Activated T-helper 1 cell treated with anti-CD3 and anti-CD28 coated beads, Interleukin-12 subunit alpha, Interleukin-12 subunit beta, Interleukin-2, Interleukin-4 antibody, amounts not matched to agents 30 ng/mL and 10 ng/mL and 1 ng/mL, durations not matched to agents 14 hours and 24 hours and 36 hours (primary cell): ENCODE measurements at regions of chr16 and their contacts with region 1.

Region 1: DNA sequence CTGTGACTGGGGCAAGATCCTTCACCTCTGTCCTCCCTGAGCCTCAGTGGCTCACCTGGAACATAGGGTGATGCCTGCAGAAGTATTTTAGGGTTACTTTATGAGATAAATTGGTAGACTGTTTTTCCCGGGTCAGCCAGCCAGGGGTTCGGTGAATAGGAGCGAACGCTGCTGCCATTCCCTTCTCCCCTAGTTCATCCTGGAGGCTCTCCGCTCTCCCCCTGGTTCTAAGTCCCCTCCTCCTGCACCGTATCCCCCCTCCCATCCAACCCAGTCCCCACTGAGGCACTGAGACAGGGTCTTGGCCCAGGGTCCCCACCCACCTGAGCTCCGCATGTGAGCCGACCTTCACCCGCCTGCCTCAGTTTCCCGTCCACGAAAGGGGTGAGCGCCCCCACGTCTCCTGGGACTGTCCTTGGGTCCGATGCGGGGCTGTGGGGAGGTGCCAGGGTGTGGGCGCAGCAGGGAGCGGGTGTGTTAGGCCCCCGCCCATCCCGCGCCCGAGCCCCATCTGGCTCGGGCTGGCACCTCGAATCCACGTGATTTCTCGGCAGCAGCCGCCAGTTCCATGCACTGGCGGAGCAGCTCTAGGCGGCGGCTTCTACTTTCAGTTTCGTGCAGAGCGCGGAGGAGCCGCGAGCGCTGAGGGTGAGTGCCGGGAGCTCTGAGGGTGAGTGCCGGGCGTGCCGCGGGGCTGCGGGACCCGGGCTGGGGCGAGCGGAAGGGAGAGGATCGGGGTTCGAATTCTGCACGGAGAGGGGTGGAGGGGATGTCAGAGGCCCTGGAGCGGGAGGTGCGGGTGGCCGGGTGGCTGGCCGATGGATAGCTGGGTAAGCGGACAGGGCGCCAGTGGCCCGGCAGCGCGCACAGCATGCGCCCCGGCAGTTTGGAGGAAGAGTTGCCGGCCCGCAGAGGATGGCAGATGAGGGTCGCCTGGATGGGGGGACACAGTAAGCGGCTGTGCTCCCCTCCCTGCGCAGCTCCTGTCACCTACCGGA is at the start of gene NLRC5:
- DNase-seq: peak; percentile 89
- H3K4me3 Mint-ChIP-seq: peak within 1 kb of the TSS; percentile 97
- H3K27ac Mint-ChIP-seq: peak within 1 kb of the TSS; percentile 97
- H3K4me1 Mint-ChIP-seq: peaks cover 83% of the 10 kb centered on the region
- H3K27me3 Mint-ChIP-seq: no peaks in the 10 kb centered on the region
- total RNA-seq, gene NLRC5: 164 and 175 TPM in 2 replicates

Region 2: GRCh38 chr16:56931892-56932720 is 57.1 kb before region 1 on chr16 and contains the start of gene HERPUD1:
- intact Hi-C with region 1: loop called (anchors 2 kb)
- DNase-seq: peak; percentile 99
- H3K4me3 Mint-ChIP-seq: peak within 1 kb of the TSS; percentile 95
- H3K27ac Mint-ChIP-seq: peak within 1 kb of the TSS; percentile 94
- H3K4me1 Mint-ChIP-seq: peaks cover 41% of the 10 kb centered on the region
- H3K27me3 Mint-ChIP-seq: no peaks in the 10 kb centered on the region
- total RNA-seq, gene HERPUD1: 176 and 178 TPM in 2 replicates

Region 3: DNA sequence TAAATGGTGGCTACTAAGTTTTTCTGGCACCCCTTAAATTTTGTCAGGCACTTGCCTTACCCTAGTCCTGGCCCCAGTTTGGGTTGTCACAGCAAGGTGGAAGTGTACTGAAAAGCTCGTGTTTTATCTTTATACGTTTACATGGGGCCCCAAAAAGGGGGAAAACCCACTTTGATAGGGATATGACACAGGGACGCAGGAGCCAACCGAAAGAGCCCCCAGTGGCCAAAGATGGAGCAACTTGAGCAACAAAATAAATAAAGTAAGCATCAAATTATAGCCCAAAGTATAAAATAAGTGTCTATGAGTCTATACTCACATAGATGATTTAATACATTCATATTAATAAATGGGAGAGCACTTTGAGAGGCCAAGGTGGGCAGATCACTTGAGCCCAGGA is 32.5 kb before region 1 on chr16:
- intact Hi-C with region 1: no loop called
- DNase-seq: no peak
- H3K4me3 Mint-ChIP-seq: no peak overlapping the region
- H3K27ac Mint-ChIP-seq: no peak overlapping the region
- H3K4me1 Mint-ChIP-seq: no peaks in the 10 kb centered on the region
- H3K27me3 Mint-ChIP-seq: peaks cover 7% of the 10 kb centered on the region

Region 4: DNA sequence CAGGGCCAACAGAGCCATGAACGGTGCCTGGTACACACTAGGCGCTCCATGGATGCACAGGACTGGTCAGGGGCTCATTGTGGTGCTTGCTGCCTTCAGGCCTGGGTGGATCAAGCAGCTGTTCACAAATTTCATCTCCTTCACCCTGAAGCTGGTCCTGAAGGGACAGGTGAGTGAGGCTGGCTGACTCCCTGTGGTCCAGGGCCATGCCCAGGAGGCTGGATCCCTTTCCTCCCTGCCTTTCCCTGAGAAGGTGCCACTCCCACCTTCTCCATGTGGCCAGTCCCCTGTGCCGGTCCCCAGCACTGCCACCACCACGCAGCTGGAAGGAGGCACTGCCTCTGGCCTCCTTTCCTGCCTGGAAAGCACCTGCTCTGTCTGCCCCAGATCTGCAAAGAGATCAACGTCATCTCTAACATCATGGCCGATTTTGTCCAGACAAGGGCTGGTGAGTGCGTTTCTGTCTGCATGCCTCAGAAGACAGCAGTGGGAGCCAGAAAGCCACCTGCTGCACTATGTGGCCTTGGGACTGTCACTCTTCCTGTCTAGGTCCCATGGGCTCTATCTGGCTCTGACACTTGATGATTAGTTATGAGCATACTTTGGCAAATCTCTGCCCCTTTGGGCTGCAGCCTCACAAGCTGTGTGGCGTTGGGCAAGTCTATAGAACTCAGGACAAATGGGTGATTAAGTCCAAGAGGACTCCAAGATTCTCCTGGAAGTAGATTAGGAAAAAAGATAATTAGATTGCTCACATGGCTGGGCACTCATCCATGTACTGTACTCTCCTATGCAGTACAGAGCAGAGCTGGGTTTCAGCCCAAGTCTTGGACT is 18.1 kb before region 1 on chr16:
- intact Hi-C with region 1: no loop called
- DNase-seq: no peak
- H3K4me3 Mint-ChIP-seq: no peak overlapping the region
- H3K27ac Mint-ChIP-seq: no peak overlapping the region
- H3K4me1 Mint-ChIP-seq: peaks cover 36% of the 10 kb centered on the region
- H3K27me3 Mint-ChIP-seq: no peaks in the 10 kb centered on the region

Region 5: DNA sequence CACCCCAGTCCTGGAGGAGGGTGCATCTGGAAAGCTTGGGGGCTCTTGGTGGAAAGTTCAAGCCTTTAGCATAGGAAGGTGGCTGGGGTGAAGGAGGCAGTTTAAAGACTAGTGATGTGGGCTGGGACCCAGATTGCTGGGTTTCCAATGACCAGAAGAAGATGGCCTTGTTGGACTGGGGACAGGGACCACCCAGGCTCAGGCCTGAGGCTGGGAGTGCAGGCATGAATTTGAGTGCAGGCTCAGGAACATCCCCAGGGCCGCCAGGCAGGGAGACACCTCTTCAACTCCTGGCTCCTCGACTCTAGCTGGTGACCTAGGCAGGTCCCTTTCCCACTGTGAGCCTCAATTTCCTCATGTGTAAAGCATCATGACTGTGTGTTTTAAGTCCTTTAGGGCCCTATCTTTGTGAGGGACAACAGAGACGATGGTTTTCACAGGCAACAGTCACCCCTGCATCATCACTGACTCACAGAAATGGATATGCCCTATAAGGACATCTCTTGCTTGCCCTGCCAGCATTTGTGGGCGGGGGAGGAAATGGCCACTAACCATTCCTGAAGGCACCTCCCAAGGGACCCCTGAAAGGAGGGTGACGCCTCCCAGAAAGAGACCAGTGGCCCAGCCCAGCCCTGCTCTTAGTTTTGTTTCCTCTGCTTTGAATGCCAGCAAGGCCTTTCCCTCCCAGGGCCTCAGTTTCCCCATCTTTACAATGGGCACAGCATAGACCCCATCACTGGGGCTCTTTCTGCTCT is 11.2 kb after region 1 on chr16:
- intact Hi-C with region 1: loop called (anchors 1 kb)
- DNase-seq: no peak
- H3K4me3 Mint-ChIP-seq: peak overlapping the region; percentile 54
- H3K27ac Mint-ChIP-seq: peak overlapping the region; percentile 91
- H3K4me1 Mint-ChIP-seq: peaks cover 90% of the 10 kb centered on the region
- H3K27me3 Mint-ChIP-seq: no peaks in the 10 kb centered on the region

Region 6: GRCh38 chr16:57023541-57024249 is 34.4 kb after region 1 on chr16:
- intact Hi-C with region 1: no loop called
- DNase-seq: peak; percentile 60
- H3K4me3 Mint-ChIP-seq: peak overlapping the region; percentile 34
- H3K27ac Mint-ChIP-seq: peak overlapping the region; percentile 58
- H3K4me1 Mint-ChIP-seq: peaks cover 76% of the 10 kb centered on the region
- H3K27me3 Mint-ChIP-seq: no peaks in the 10 kb centered on the region